OCI-LY7 (cell line): ENCODE measurements at regions of chrX and their contacts with region 1.

Region 1: GRCh38 chrX:64894454-64895038 is 81.7 kb downstream of the ZC4H2 start:
- DNase-seq: peak; percentile 54
- H3K4me3 ChIP-seq: no peak overlapping the region
- H3K27ac ChIP-seq: no peak overlapping the region
- H3K4me1 ChIP-seq: no peaks in the 10 kb centered on the region
- CTCF ChIP-seq: peak; percentile 78

Region 2: DNA sequence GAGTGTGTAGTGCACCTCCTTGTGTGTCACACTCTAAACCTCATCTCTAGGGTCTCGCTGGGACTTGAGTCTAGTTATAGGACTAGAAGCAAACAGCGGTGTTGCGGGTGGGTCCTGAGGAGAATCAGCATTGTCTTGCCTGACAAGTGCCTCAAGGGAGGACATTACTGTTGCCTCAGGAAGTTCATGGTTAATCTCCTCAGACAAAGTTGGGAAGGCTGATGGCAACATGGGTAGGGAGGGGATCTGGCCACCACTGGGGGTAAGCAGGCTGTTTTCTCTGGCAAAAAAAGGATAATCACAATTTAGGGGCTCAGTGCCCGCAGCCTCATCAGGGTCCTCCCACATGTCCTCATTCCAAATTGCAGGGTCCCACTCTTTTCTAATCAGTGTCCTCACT is 676.5 kb before region 1 on chrX:
- CTCF ChIA-PET with region 1: no interaction called
- POLR2A ChIA-PET with region 1: no interaction called
- intact Hi-C with region 1: no loop called
- DNase-seq: no peak
- H3K4me3 ChIP-seq: no peak overlapping the region
- H3K27ac ChIP-seq: no peak overlapping the region
- H3K4me1 ChIP-seq: no peaks in the 10 kb centered on the region
- CTCF ChIP-seq: no peak

Region 3: GRCh38 chrX:64570204-64570603 is 324.3 kb before region 1 on chrX:
- CTCF ChIA-PET with region 1: no interaction called
- POLR2A ChIA-PET with region 1: no interaction called
- intact Hi-C with region 1: loop called (anchors 5 kb)
- DNase-seq: peak; percentile 39
- H3K4me3 ChIP-seq: no peak overlapping the region
- H3K27ac ChIP-seq: no peak overlapping the region
- H3K4me1 ChIP-seq: peaks cover 4% of the 10 kb centered on the region
- CTCF ChIP-seq: peak; percentile 68

Region 4: GRCh38 chrX:64842492-64842891 is 52.1 kb before region 1 on chrX:
- CTCF ChIA-PET with region 1: no interaction called
- POLR2A ChIA-PET with region 1: no interaction called
- intact Hi-C with region 1: loop called (anchors 5 kb)
- DNase-seq: peak; percentile 91
- H3K4me3 ChIP-seq: peak overlapping the region; percentile 57
- H3K27ac ChIP-seq: peak overlapping the region; percentile 100
- H3K4me1 ChIP-seq: peaks cover 35% of the 10 kb centered on the region
- CTCF ChIP-seq: no peak

Region 5: GRCh38 chrX:65203545-65203944 is 309.0 kb after region 1 on chrX:
- CTCF ChIA-PET with region 1: no interaction called
- POLR2A ChIA-PET with region 1: no interaction called
- intact Hi-C with region 1: no loop called
- DNase-seq: no peak
- H3K4me3 ChIP-seq: no peak overlapping the region
- H3K27ac ChIP-seq: no peak overlapping the region
- H3K4me1 ChIP-seq: no peaks in the 10 kb centered on the region
- CTCF ChIP-seq: no peak

Region 6: DNA sequence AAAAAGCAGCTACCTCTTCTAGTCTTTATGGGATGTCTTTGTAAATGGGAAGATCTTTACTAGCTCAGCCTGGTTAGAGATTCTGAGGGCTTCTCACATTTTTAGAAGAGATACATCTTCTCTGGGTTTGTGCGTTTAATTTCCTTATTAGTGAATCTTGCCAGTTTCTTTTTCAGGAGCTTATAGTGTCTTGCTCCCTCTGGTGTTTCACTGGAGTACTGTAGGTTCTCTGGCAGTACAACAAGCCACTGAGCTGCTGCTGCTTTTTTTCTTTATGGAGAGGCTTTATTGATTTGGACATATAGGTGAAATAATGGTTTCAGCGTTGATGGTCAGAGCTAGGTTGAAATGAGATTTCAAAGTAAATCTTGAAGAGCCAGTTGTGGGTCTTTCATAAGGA is 557.1 kb after region 1 on chrX:
- CTCF ChIA-PET with region 1: no interaction called
- POLR2A ChIA-PET with region 1: no interaction called
- intact Hi-C with region 1: loop called (anchors 10 kb)
- DNase-seq: peak; percentile 64
- H3K4me3 ChIP-seq: no peak overlapping the region
- H3K27ac ChIP-seq: no peak overlapping the region
- H3K4me1 ChIP-seq: no peaks in the 10 kb centered on the region
- CTCF ChIP-seq: peak; percentile 80